ENCODE measurements at regions of chr2 and their contacts with region 1.

Region 1: GRCh38 chr2:218269899-218270720 is at the starts of genes AAMP and PNKD:
- DNase-seq: peak; percentile 100
- ATAC-seq: peak; percentile 87
- H3K4me3 ChIP-seq: peak within 1 kb of the TSS; percentile 78 to 97 (median 96)
- H3K27ac ChIP-seq: peak within 1 kb of the TSS; percentile 80
- H3K4me1 ChIP-seq: peaks cover 58% of the 10 kb centered on the region
- H3K27me3 ChIP-seq: no peaks in the 10 kb centered on the region; a peak in 1 of 5 replicates
- CTCF ChIP-seq: peak; percentile 54
- EP300 ChIP-seq: 0 out of 4 replicates have a peak, but pooled peaks of 1 of the 2 experiments have one; percentile 47
- POLR2A ChIP-seq: peak; percentile 84 to 94
- RAD21 ChIP-seq: peak; percentile 40
- total RNA-seq, gene AAMP: 186 and 241 TPM in 2 replicates
- total RNA-seq, gene PNKD: 50.0 and 55.9 TPM in 2 replicates

Region 2: DNA sequence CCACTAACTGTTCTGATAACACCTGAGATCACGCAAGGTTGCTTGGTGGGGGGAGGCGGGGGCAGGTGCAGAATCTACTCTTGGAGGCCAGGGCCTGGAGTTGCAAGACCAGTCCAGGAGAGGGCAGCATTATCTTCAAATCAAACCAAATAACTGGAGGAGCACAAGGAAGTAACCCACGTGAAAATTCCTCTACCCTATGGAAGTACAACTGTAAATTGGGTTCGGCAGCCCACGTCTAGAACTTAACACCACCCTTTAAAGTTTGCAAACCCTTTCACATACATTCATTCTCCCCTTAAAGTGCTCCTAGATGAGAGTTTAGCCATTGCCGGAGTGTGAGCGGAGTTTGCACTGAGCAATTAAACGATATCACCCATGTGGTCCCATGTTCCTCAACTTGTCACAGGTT is 83.7 kb before region 1 on chr2:
- CTCF ChIA-PET with region 1: interaction called, 4 read pairs
- POLR2A ChIA-PET with region 1: interaction called, 3 read pairs
- in situ Hi-C with region 1: no loop called
- intact Hi-C with region 1: loop called (anchors 5 kb)
- DNase-seq: peak; percentile 76
- ATAC-seq: peak; percentile 94
- H3K4me3 ChIP-seq: peak overlapping the region in 1 of 3 experiments; percentile 14; a peak in 1 of 6 replicates
- H3K27ac ChIP-seq: no peak overlapping the region
- H3K4me1 ChIP-seq: peaks cover 15% of the 10 kb centered on the region
- H3K27me3 ChIP-seq: peaks cover 0 to 11% of the 10 kb centered on the region in 2 experiments; a peak in 1 of 5 replicates
- CTCF ChIP-seq: peak; percentile 87
- EP300 ChIP-seq: no peak
- POLR2A ChIP-seq: no peak
- RAD21 ChIP-seq: peak; percentile 64

Region 3: DNA sequence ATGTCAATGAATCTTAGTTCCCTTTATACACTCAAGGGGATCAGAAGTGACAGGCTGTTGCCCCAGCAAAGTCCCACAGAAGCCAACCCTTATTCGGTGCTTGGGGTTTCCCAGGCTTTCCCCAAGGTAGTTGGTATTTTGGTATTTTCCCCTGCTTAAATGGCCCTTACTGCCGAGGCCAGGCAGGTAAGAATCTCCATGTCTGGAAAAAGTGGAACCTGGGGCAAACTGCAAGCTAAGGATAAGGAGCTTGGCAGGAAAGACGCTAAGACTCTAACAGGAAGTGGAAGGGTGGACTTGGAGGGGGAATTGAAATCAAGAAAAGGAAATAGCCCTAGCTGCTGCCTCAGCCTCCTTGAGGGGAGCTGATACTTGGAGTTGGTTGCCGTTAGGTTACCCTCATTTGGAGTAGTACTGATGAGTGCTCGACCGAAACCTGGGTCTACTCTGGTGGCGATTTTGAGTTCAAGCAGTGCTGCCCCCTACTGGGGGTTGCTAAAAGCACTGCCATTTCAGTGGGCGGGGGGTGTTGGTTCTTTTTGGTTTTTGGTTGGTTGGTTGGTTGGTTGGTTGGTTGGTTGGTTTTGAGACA is 12.6 kb before region 1 on chr2:
- CTCF ChIA-PET with region 1: no interaction called
- POLR2A ChIA-PET with region 1: interaction called, 27 read pairs
- in situ Hi-C with region 1: no loop called
- intact Hi-C with region 1: no loop called
- DNase-seq: no peak
- ATAC-seq: peak; percentile 14; the same call in 2 of the 3 replicates
- H3K4me3 ChIP-seq: no peak overlapping the region
- H3K27ac ChIP-seq: no peak overlapping the region
- H3K4me1 ChIP-seq: peaks cover 29% of the 10 kb centered on the region
- H3K27me3 ChIP-seq: no peaks in the 10 kb centered on the region
- CTCF ChIP-seq: peak; percentile 57
- EP300 ChIP-seq: no peak
- POLR2A ChIP-seq: no peak
- RAD21 ChIP-seq: 0 out of 2 replicates have a peak, but pooled peaks have one; percentile 13

Region 4: GRCh38 chr2:218301176-218301819 is 31.2 kb after region 1 on chr2:
- CTCF ChIA-PET with region 1: interaction called, 9 read pairs
- POLR2A ChIA-PET with region 1: interaction called, 10 read pairs
- in situ Hi-C with region 1: no loop called
- intact Hi-C with region 1: loop called (anchors 1 kb)
- DNase-seq: peak; percentile 90
- ATAC-seq: peak; percentile 64
- H3K4me3 ChIP-seq: no peak overlapping the region
- H3K27ac ChIP-seq: peak overlapping the region; percentile 25
- H3K4me1 ChIP-seq: peaks cover 63% of the 10 kb centered on the region
- H3K27me3 ChIP-seq: no peaks in the 10 kb centered on the region
- CTCF ChIP-seq: peak; percentile 99
- EP300 ChIP-seq: no peak
- POLR2A ChIP-seq: no peak
- RAD21 ChIP-seq: peak; percentile 99

Region 5: GRCh38 chr2:218406209-218406948 is 136.3 kb after region 1 on chr2:
- CTCF ChIA-PET with region 1: no interaction called
- POLR2A ChIA-PET with region 1: interaction called, 10 read pairs
- in situ Hi-C with region 1: no loop called
- intact Hi-C with region 1: no loop called
- DNase-seq: peak; percentile 92
- ATAC-seq: peak; percentile 78
- H3K4me3 ChIP-seq: peak overlapping the region; percentile 67 to 86 (median 67)
- H3K27ac ChIP-seq: peak overlapping the region; percentile 79
- H3K4me1 ChIP-seq: peaks cover 61% of the 10 kb centered on the region
- H3K27me3 ChIP-seq: no peaks in the 10 kb centered on the region
- CTCF ChIP-seq: peak; percentile 98
- EP300 ChIP-seq: peak; percentile 37 to 53; a peak in 2 of 4 replicates
- POLR2A ChIP-seq: peak in 1 of 2 experiments; percentile 23; a peak in 1 of 4 replicates
- RAD21 ChIP-seq: peak; percentile 98

Region 6: DNA sequence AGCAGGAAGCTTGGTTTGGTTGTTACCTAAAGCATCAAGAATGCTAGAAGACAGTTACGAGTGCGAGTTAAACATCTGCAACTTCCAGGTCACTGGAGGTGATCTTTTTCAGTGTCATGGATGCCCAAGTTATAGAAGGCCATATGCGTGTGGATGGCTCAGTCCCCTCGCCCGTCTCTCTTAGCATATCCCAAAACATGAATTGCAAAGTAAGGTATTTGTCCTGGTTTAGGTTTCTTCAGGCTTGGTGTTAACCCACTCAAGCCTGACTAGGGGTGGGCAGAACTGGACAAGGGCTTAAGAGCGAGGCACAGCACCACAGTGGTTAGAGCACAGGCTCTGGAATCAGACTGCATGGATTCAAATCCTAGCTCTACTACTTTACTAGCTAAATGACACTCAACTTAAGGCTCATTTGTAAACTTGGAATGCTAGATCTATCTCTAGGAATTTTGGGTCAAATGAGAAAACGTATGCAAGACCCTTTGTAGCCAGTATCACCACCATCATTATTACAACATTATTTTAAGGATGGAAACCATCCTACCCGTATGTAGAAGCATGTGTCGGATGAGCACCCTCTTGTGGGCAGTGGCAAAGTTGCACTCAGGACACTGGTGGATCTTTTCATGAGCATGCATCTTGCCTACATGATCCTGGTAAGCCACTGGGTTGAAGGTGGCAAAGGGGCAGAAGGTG is 378.1 kb after region 1 on chr2:
- CTCF ChIA-PET with region 1: no interaction called
- POLR2A ChIA-PET with region 1: no interaction called
- in situ Hi-C with region 1: loop called (anchors 5 kb)
- intact Hi-C with region 1: no loop called
- DNase-seq: peak; percentile 56
- ATAC-seq: peak; percentile 84
- H3K4me3 ChIP-seq: no peak overlapping the region
- H3K27ac ChIP-seq: no peak overlapping the region
- H3K4me1 ChIP-seq: peaks cover 11% of the 10 kb centered on the region; the same call in 1 of the 2 replicates
- H3K27me3 ChIP-seq: no peaks in the 10 kb centered on the region
- CTCF ChIP-seq: peak; percentile 95
- EP300 ChIP-seq: no peak
- POLR2A ChIP-seq: no peak
- RAD21 ChIP-seq: peak; percentile 77